Common myeloid progenitor, CD34-positive (primary cell): ENCODE measurements at regions of chr9 and their contacts with region 1.

Region 1: DNA sequence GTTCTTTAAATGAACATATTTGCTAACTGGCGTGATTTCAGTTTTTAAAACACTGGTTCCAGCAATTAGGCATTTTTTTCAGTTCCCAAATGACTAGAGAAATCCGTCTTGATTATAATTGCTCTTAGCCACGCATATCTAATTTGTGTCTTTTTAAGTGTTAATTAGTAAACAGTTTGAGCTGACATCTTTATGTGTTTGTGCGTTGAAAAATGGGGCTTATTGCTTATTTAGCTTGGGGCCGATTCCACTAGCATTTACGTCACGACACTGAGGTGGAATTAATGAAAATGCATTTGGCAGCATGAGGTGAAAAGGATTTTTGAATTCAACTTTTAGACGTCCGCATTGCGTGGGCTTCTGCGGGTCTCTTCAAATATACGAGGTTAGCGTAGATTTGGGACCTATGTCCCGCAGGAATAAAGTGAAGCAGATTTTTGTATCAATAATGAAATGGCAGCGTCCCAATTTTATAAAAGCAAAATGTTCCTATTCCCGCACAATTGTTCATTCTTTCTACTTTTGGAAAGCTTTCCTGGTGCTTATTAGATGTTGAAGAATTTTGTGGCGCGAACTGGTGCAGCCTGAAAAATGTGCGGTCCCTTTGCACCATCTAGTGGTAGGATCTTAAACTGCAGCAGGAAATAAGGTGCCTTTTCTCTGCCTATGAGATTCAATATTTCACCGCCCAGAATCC is 122.7 kb upstream of the LMX1B start:
- DNase-seq: peak; percentile 67 to 83 (median 67)
- H3K4me3 ChIP-seq: peak overlapping the region in 1 of 7 experiments; percentile 61
- H3K27ac ChIP-seq: no peak overlapping the region
- H3K4me1 ChIP-seq: peaks cover 4 to 34% (median 24%) of the 10 kb centered on the region in 4 experiments
- H3K27me3 ChIP-seq: no peaks in the 10 kb centered on the region

Region 2: DNA sequence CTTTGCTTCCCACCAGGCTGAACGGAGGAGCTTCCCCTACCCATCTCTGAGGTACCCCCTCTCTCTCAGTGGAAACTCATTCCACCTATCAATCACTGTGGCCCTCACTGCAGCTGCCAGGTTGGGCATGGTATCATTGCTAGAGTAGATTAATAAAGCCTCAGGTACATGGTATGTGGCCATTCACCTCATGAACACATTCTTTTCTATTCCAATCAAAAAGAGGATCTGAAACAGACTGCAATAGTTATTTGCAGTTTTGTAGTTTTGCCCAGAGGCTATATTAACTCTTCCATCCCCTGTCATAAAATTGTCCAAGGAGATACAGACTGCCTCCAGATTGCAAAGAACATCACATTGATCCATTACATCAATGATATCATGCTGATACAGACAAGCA is 250.2 kb before region 1 on chr9:
- CTCF ChIA-PET with region 1: no interaction called
- POLR2A ChIA-PET with region 1: no interaction called
- DNase-seq: no peak
- H3K4me3 ChIP-seq: no peak overlapping the region
- H3K27ac ChIP-seq: no peak overlapping the region
- H3K4me1 ChIP-seq: no peaks in the 10 kb centered on the region
- H3K27me3 ChIP-seq: peaks cover 0 to 3% (median 0%) of the 10 kb centered on the region in 5 experiments

Region 3: DNA sequence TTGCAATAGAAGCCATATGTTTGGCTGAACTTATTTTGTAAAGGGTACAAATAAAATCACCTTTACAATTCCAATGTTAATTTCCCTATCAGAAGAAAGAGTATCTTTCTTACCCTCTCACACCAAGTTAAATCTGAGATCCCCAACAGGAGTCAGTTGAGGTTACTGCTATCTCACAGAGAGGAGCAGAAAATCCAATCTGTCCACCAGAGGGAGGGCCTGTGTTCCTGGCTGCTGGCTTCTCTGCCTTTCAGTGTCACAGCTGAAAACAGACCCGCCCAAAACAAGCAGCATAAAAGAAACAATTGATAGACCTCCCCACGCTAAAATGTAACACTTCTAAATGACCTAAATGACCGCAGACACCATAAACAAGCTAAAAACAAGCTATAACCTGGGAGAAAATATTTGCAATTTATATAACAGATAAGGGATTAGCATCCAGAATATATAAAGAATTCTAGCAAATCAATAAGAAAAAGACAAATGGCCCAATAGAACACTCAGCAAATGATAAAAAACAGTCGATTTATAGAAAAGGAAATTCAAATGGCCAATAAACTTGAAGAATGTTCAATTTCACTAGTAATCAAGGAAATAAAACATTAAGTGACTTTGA is 188.9 kb before region 1 on chr9:
- CTCF ChIA-PET with region 1: interaction called, 43 read pairs
- POLR2A ChIA-PET with region 1: no interaction called
- DNase-seq: peak; percentile 71 to 85 (median 84)
- H3K4me3 ChIP-seq: no peak overlapping the region
- H3K27ac ChIP-seq: no peak overlapping the region
- H3K4me1 ChIP-seq: no peaks in the 10 kb centered on the region
- H3K27me3 ChIP-seq: no peaks in the 10 kb centered on the region

Region 4: DNA sequence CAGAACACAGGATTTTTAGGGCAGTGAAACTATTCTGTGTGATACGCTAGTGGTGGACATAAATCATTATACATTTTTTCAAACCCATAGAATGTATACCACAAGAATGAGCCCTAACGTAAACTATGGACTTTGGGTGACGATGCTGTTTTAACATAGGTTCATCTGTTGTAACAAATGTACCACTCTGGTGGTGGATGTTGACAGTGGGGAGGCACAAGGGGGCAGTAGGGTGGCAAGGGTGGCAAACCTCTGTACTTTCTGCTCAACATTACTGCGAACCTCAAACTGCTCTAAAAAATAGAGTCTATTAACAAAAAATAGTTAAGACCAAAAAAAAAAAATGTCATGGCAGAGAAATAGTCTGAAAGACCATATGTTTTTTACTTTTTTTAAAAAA is 173.5 kb before region 1 on chr9:
- CTCF ChIA-PET with region 1: interaction called, 49 read pairs
- POLR2A ChIA-PET with region 1: no interaction called
- DNase-seq: peak; percentile 56 to 84 (median 81)
- H3K4me3 ChIP-seq: no peak overlapping the region
- H3K27ac ChIP-seq: no peak overlapping the region
- H3K4me1 ChIP-seq: peaks cover 0 to 4% (median 0%) of the 10 kb centered on the region in 4 experiments
- H3K27me3 ChIP-seq: no peaks in the 10 kb centered on the region

Region 5: GRCh38 chr9:126404336-126404858 is 86.6 kb before region 1 on chr9:
- CTCF ChIA-PET with region 1: interaction called, 104 read pairs
- POLR2A ChIA-PET with region 1: no interaction called
- DNase-seq: no peak
- H3K4me3 ChIP-seq: no peak overlapping the region
- H3K27ac ChIP-seq: no peak overlapping the region
- H3K4me1 ChIP-seq: peaks cover 4 to 18% (median 8%) of the 10 kb centered on the region in 4 experiments
- H3K27me3 ChIP-seq: no peaks in the 10 kb centered on the region

Region 6: GRCh38 chr9:126425869-126426268 is 65.2 kb before region 1 on chr9:
- CTCF ChIA-PET with region 1: interaction called, 10 read pairs
- POLR2A ChIA-PET with region 1: no interaction called
- DNase-seq: no peak
- H3K4me3 ChIP-seq: no peak overlapping the region
- H3K27ac ChIP-seq: no peak overlapping the region
- H3K4me1 ChIP-seq: peaks cover 0 to 10% (median 8%) of the 10 kb centered on the region in 4 experiments
- H3K27me3 ChIP-seq: no peaks in the 10 kb centered on the region

Region 7: GRCh38 chr9:126471084-126471624 is 19.9 kb before region 1 on chr9:
- CTCF ChIA-PET with region 1: interaction called, 16 read pairs
- POLR2A ChIA-PET with region 1: interaction called, 4 read pairs
- DNase-seq: peak; percentile 95 to 99 (median 98)
- H3K4me3 ChIP-seq: peak overlapping the region in 4 of 7 experiments; percentile 40 to 61 (median 46)
- H3K27ac ChIP-seq: peak overlapping the region in 1 of 2 experiments; percentile 52
- H3K4me1 ChIP-seq: peaks cover 35 to 79% (median 60%) of the 10 kb centered on the region in 4 experiments
- H3K27me3 ChIP-seq: no peaks in the 10 kb centered on the region

Region 8: GRCh38 chr9:126564161-126564560 is 73.1 kb after region 1 on chr9:
- CTCF ChIA-PET with region 1: no interaction called
- POLR2A ChIA-PET with region 1: no interaction called
- DNase-seq: peak; percentile 8 to 25 (median 18)
- H3K4me3 ChIP-seq: no peak overlapping the region
- H3K27ac ChIP-seq: no peak overlapping the region
- H3K4me1 ChIP-seq: peaks cover 2 to 14% (median 9%) of the 10 kb centered on the region in 4 experiments
- H3K27me3 ChIP-seq: peaks cover 0 to 24% (median 3%) of the 10 kb centered on the region in 5 experiments

Region 9: DNA sequence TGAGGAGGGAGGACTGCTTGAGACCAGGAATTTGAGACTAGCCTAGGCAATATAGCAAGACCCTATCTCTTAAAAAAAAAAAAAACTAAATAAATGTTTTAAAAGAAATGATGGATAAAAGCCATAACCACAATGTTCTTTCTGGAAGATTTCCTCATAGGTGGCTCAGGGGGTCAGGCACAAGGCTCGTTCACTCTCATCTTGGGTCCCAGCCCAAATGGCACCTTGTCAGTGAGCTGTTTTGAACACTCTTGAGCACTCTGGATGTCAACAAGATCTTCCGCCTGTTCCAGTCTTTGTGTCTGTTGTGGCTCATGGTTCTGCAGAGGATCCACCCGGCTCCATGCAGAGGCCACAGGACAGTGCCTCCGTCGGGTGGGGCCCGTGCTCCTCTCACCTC is 87.0 kb after region 1 on chr9:
- CTCF ChIA-PET with region 1: no interaction called
- POLR2A ChIA-PET with region 1: no interaction called
- DNase-seq: no peak
- H3K4me3 ChIP-seq: no peak overlapping the region
- H3K27ac ChIP-seq: no peak overlapping the region
- H3K4me1 ChIP-seq: no peaks in the 10 kb centered on the region
- H3K27me3 ChIP-seq: peaks cover 0 to 16% (median 12%) of the 10 kb centered on the region in 5 experiments